ENCODE measurements at regions of chr1 and their contacts with region 1.

Region 1: GRCh38 chr1:160618763-160619274 is 28.0 kb downstream of the SLAMF1 start:
- DNase-seq: no peak
- H3K4me3 Mint-ChIP-seq: no peak overlapping the region
- H3K27ac Mint-ChIP-seq: peak overlapping the region; percentile 48
- H3K4me1 Mint-ChIP-seq: peaks cover 75% of the 10 kb centered on the region
- H3K27me3 Mint-ChIP-seq: no peaks in the 10 kb centered on the region

Region 2: DNA sequence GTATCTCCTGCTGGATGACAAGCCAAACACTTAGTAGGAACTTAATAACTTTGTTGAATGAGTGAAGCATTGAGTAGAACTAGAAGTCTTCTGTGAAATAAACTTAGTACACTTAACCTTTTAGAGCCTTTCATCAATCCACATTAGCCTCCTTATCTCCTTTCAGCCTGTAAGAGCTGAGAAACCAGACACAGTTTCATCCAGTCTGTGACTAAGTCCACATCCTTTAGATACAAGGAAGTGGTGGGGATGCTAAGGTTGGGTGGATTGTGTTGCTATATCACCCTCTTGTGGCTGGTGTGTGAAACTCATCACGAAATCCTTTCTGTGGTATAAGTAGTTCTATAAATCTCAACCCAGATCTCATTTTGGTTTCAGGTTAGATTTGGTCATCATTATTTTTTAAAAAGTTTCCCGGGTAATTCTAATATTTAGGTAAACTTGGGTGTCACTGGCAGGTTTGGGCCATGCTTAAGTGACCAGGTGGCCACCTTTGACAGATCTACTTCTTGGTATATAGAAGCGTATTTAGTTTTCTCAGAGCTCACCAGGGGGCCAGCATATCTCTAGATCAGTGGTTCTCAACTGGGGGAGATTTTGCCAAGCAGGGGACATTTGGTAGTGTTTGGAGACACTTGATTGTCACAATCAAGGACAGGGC is 11.7 kb before region 1 on chr1:
- CTCF ChIA-PET with region 1: interaction called, 14 read pairs
- POLR2A ChIA-PET with region 1: interaction called, 28 read pairs
- DNase-seq: peak; percentile 70
- H3K4me3 Mint-ChIP-seq: no peak overlapping the region
- H3K27ac Mint-ChIP-seq: peak overlapping the region; percentile 58
- H3K4me1 Mint-ChIP-seq: peaks cover 59% of the 10 kb centered on the region
- H3K27me3 Mint-ChIP-seq: no peaks in the 10 kb centered on the region

Region 3: DNA sequence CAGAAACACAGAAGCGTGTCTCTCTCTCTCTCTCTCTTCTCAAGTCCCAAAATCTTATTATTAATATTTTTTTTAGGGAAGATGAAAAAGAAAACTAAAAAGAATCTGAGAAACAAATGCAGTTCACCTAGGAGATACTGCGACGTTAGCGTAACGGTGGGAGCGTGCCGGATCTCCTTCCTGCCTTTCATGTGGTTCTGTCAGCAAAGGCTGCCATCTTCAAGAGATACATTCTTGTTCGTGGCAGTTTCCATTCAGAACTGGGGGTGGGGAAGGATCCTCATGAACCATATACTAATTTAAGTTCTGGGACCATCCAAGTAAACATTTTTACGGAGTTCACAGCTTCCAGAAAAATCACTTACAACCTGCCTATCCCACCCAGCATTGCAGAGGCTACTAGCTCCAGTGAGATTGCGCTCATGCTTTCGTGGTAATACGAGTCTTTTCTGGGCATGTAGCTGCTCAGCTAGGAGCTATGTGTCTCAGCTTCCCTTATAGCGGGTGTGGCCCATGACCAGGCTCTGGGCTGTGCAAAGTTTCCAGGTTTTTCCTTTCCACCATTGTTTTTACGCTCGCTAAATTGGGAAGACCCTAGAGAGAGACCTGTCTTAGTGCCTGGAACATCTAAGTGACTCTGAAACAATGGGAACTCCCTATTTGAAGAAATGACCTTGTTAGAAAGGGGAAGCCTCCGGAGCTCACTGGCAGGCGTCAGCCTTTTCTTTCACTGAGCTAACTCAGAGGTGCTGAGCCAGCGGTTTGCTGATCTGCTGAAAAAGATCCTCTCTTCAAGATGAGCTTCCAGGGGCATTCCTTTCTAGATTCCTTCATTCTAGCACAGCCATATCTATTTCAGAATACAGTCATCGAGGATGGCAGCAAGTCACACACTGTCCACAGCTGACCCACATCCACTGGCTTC is 10.7 kb after region 1 on chr1:
- CTCF ChIA-PET with region 1: interaction called, 23 read pairs
- POLR2A ChIA-PET with region 1: interaction called, 21 read pairs
- DNase-seq: peak; percentile 81
- H3K4me3 Mint-ChIP-seq: peak overlapping the region; percentile 62
- H3K27ac Mint-ChIP-seq: peak overlapping the region; percentile 99
- H3K4me1 Mint-ChIP-seq: peaks cover 96% of the 10 kb centered on the region
- H3K27me3 Mint-ChIP-seq: no peaks in the 10 kb centered on the region

Region 4: GRCh38 chr1:160637821-160638539 is 19.2 kb after region 1 on chr1:
- CTCF ChIA-PET with region 1: interaction called, 12 read pairs
- POLR2A ChIA-PET with region 1: interaction called, 362 read pairs
- DNase-seq: peak; percentile 73
- H3K4me3 Mint-ChIP-seq: peak overlapping the region; percentile 70
- H3K27ac Mint-ChIP-seq: peak overlapping the region; percentile 95
- H3K4me1 Mint-ChIP-seq: peaks cover 95% of the 10 kb centered on the region
- H3K27me3 Mint-ChIP-seq: no peaks in the 10 kb centered on the region

Region 5: DNA sequence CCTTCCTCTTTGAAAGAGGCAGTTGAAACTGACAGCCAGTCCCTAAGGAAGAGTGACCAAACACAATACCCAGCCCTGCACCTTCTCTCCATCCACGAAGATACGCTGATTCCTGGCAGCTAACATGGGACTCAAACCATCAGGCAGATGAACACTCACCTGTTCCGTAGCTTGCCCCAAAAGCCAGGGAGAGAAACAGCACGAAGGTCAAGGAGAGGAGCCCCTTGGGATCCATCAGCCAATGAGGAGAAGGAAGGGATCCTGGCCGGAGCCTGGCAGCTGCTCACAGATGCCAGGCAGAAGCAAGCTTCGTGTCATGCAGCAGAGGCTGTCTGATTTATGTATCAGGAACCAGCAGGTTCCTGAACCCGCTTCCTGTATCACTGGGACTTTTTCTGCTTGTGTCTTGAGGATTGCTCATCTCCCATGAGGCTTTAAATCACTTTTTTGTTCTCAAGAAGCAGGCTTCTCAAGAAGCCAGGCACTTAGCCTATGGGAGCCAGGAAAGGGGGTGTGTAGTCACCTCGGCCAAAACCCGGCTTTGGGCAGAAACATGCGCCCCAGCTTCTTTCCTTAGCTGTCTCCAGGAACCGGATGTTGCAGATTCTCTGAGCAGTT is 28.0 kb after region 1 on chr1 and contains the start of gene SLAMF1:
- CTCF ChIA-PET with region 1: interaction called, 16 read pairs
- POLR2A ChIA-PET with region 1: interaction called, 362 read pairs
- DNase-seq: peak; percentile 49
- H3K4me3 Mint-ChIP-seq: peak within 1 kb of the TSS; percentile 88
- H3K27ac Mint-ChIP-seq: peak within 1 kb of the TSS; percentile 89
- H3K4me1 Mint-ChIP-seq: peaks cover 53% of the 10 kb centered on the region
- H3K27me3 Mint-ChIP-seq: no peaks in the 10 kb centered on the region
- total RNA-seq, gene SLAMF1: 106 to 113 TPM

Region 6: DNA sequence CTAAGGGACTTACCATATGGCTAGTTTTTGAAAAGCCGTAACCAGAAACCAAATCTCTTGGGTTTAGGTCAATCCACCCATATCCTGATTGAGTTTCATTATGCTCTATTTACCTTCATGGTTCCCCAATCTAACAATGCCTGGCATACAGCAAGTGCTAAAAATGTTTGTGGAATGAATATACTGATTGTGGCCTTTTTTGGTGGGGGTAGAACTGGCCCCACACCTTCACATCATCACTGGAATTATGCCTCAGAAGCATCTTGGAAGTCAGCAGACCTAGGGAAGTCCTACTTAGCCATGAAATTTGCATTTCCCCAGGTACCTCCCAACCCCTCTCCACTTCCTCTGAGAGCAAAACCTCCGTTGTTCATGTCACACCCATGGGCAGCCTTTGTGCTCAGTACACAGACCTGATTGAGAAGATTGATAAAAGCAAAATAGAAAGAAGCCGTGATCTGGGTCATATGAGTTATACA is 45.8 kb after region 1 on chr1:
- CTCF ChIA-PET with region 1: interaction called, 16 read pairs
- POLR2A ChIA-PET with region 1: interaction called, 13 read pairs
- DNase-seq: peak; percentile 66
- H3K4me3 Mint-ChIP-seq: peak overlapping the region; percentile 62
- H3K27ac Mint-ChIP-seq: peak overlapping the region; percentile 91
- H3K4me1 Mint-ChIP-seq: peaks cover 77% of the 10 kb centered on the region
- H3K27me3 Mint-ChIP-seq: no peaks in the 10 kb centered on the region

Region 7: GRCh38 chr1:160711602-160712311 is 92.9 kb after region 1 on chr1 and contains the start of gene CD48:
- CTCF ChIA-PET with region 1: interaction called, 4 read pairs
- POLR2A ChIA-PET with region 1: interaction called, 19 read pairs
- DNase-seq: peak; percentile 61
- H3K4me3 Mint-ChIP-seq: no peak within 1 kb of the TSS
- H3K27ac Mint-ChIP-seq: no peak within 1 kb of the TSS
- H3K4me1 Mint-ChIP-seq: peaks cover 20% of the 10 kb centered on the region
- H3K27me3 Mint-ChIP-seq: no peaks in the 10 kb centered on the region
- total RNA-seq, gene CD48: 403 to 404 TPM